Panc1 (cell line): ENCODE measurements at regions of chr12 and their contacts with region 1.

Region 1: DNA sequence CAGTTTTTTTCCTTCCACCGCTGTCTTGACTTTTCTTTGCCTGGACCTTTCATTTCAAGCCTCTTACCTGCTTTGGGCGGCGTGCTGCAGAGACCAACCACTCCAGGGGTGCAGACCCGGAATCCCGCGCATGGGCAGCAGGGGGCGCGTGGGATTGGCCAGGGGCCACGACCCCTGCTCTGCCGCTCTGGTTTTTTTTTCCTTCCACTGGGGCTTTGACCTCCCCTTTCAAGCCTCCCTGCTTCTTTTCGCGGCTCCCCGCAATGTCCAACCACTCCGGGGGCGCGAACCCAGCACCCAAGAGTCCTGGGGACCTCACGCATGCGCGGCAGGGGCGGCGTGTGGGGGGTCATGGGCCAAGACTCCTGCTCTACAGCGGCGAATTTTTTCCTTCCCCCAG is 325.1 kb downstream of the ALG10 start:
- DNase-seq: no peak
- ATAC-seq: peak; percentile 65
- H3K4me3 ChIP-seq: peak overlapping the region; percentile 38 to 68
- H3K27ac ChIP-seq: peak overlapping the region; percentile 36; the same call in 1 of the 2 replicates
- H3K4me1 ChIP-seq: peaks cover 64% of the 10 kb centered on the region
- H3K27me3 ChIP-seq: no peaks in the 10 kb centered on the region; the same call in 1 of the 2 replicates
- CTCF ChIP-seq: peak; percentile 96

Region 2: GRCh38 chr12:34257093-34257492 is 90.3 kb before region 1 on chr12:
- CTCF ChIA-PET with region 1: no interaction called
- POLR2A ChIA-PET with region 1: no interaction called
- in situ Hi-C with region 1: no loop called
- intact Hi-C with region 1: no loop called
- DNase-seq: no peak
- ATAC-seq: no peak
- H3K4me3 ChIP-seq: no peak overlapping the region
- H3K27ac ChIP-seq: no peak overlapping the region
- H3K4me1 ChIP-seq: peaks cover 11% of the 10 kb centered on the region; the same call in 1 of the 2 replicates
- H3K27me3 ChIP-seq: no peaks in the 10 kb centered on the region
- CTCF ChIP-seq: peak; percentile 36; the same call in 1 of the 2 replicates

Region 3: DNA sequence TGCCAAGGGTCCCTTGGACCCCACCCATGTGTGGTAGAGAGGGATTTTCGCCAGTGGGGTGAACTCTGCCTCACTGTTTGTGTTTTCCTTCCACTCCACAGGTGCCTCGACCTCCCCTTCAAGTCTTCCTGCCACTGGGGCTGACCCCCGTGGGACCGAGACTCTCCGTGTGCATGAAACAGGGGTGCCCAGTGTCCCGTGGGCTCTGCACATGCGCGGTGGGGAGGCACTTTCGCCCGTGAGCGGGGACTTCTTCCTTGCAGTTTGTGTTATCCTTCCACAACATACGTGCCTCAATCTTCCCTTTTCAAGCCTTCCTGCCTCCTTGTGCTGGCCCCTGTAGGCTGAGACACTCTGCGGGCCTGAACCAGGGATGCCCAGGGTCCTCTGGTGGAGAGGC is 37.3 kb after region 1 on chr12:
- CTCF ChIA-PET with region 1: no interaction called
- POLR2A ChIA-PET with region 1: no interaction called
- in situ Hi-C with region 1: no loop called
- intact Hi-C with region 1: loop called (anchors 5 kb)
- DNase-seq: no peak
- ATAC-seq: no peak
- H3K4me3 ChIP-seq: no peak overlapping the region
- H3K27ac ChIP-seq: no peak overlapping the region
- H3K4me1 ChIP-seq: no peaks in the 10 kb centered on the region
- H3K27me3 ChIP-seq: peaks cover 7% of the 10 kb centered on the region; the same call in 1 of the 2 replicates
- CTCF ChIP-seq: no peak